Activated T-helper 1 cell treated with anti-CD3 and anti-CD28 coated beads, Interleukin-12 subunit alpha, Interleukin-12 subunit beta, Interleukin-2, Interleukin-4 antibody, amounts not matched to agents 30 ng/mL and 10 ng/mL and 1 ng/mL, durations not matched to agents 14 hours and 24 hours and 36 hours (primary cell): ENCODE measurements at regions of chr17 and their contacts with region 1.

Region 1: GRCh38 chr17:34199932-34200534 is 55.1 kb upstream of the CCL2 start:
- DNase-seq: peak; percentile 61
- H3K4me3 Mint-ChIP-seq: no peak overlapping the region
- H3K27ac Mint-ChIP-seq: no peak overlapping the region
- H3K4me1 Mint-ChIP-seq: peaks cover 18% of the 10 kb centered on the region
- H3K27me3 Mint-ChIP-seq: peaks cover 21% of the 10 kb centered on the region

Region 2: GRCh38 chr17:34261568-34262337 is 61.7 kb after region 1 on chr17:
- intact Hi-C with region 1: loop called (anchors 1 kb)
- DNase-seq: peak; percentile 4
- H3K4me3 Mint-ChIP-seq: no peak overlapping the region
- H3K27ac Mint-ChIP-seq: no peak overlapping the region
- H3K4me1 Mint-ChIP-seq: peaks cover 16% of the 10 kb centered on the region
- H3K27me3 Mint-ChIP-seq: peaks cover 31% of the 10 kb centered on the region

Region 3: GRCh38 chr17:34361478-34362061 is 161.5 kb after region 1 on chr17:
- intact Hi-C with region 1: loop called (anchors 1 kb)
- DNase-seq: peak; percentile 79
- H3K4me3 Mint-ChIP-seq: peak overlapping the region; percentile 57
- H3K27ac Mint-ChIP-seq: no peak overlapping the region
- H3K4me1 Mint-ChIP-seq: peaks cover 59% of the 10 kb centered on the region
- H3K27me3 Mint-ChIP-seq: peaks cover 15% of the 10 kb centered on the region

Region 4: GRCh38 chr17:34420254-34420766 is 220.3 kb after region 1 on chr17:
- intact Hi-C with region 1: loop called (anchors 2 kb)
- DNase-seq: peak; percentile 30
- H3K4me3 Mint-ChIP-seq: no peak overlapping the region
- H3K27ac Mint-ChIP-seq: no peak overlapping the region
- H3K4me1 Mint-ChIP-seq: no peaks in the 10 kb centered on the region
- H3K27me3 Mint-ChIP-seq: peaks cover 51% of the 10 kb centered on the region

Region 5: DNA sequence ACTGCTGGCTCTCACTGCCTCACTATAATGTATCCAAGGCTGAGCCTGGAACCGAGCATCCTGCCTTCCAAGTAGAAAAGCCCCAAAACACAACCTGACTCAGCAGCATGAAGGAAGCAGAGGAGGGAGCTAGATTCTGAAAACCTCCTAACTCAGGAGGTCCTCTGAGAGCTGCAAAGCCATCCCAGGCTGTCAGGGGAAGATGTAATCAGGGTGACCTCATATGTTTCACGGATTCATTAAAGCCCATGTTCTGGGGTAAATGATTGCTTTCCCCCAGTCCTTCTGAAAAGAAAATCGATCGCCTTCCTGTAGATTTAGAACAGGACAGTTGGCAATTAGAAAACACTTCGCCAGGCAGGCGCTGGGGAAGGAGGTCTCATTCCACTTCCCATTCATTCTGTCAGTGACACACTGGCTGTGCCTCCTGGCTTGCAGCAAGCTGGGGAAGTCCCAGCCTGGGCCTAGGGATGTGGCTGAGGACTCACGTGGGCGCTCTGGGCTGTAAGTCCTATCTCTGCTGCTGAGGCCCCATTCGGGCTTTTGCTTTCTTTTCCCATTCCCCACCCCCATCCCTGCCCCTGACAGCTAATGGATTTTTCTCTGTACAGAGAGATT is 303.6 kb after region 1 on chr17:
- intact Hi-C with region 1: loop called (anchors 10 kb)
- DNase-seq: no peak
- H3K4me3 Mint-ChIP-seq: no peak overlapping the region
- H3K27ac Mint-ChIP-seq: no peak overlapping the region
- H3K4me1 Mint-ChIP-seq: peaks cover 13% of the 10 kb centered on the region
- H3K27me3 Mint-ChIP-seq: peaks cover 14% of the 10 kb centered on the region

Region 6: GRCh38 chr17:34917381-34917780 is 717.3 kb after region 1 on chr17:
- intact Hi-C with region 1: no loop called
- DNase-seq: no peak
- H3K4me3 Mint-ChIP-seq: no peak overlapping the region
- H3K27ac Mint-ChIP-seq: no peak overlapping the region
- H3K4me1 Mint-ChIP-seq: no peaks in the 10 kb centered on the region
- H3K27me3 Mint-ChIP-seq: peaks cover 7% of the 10 kb centered on the region

Region 7: DNA sequence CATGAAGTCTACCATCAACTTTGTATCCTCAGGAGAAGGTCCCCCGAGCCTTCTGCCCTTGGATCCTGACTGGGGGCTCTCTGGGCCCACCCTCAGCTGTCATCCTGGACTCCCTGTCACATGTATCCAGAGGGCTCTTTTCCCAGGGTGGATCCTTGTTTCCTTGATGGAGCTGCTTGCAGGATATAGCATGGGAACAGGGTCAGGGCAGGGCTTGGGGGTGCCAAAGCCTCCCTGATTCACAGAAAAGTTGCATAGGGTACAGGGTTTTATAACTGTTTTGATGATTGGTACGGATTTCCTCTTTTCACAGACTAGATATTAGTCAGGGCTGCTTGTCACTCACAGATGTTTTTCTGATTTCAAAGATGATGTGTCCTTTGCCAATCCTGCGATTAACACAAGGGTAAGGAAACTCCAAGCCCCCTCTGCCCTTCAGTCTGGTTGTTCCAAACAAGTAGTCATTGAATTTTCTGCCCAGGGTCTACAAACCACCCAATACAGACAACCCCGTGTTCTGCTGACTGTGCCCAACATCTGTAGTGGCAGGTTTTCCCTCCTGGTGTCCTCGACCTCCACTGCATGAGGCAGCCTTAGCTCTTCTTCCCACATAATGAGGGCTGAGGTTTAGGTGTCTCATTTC is 1014.7 kb after region 1 on chr17:
- intact Hi-C with region 1: loop called (anchors 10 kb)
- DNase-seq: peak; percentile 12
- H3K4me3 Mint-ChIP-seq: peak overlapping the region; percentile 40
- H3K27ac Mint-ChIP-seq: peak overlapping the region; percentile 92
- H3K4me1 Mint-ChIP-seq: peaks cover 85% of the 10 kb centered on the region
- H3K27me3 Mint-ChIP-seq: no peaks in the 10 kb centered on the region